ENCODE measurements at regions of chr17 and their contacts with region 1.

Region 1: GRCh38 chr17:46121841-46122485 is 71.3 kb downstream of the KANSL1 start:
- DNase-seq: no peak
- H3K4me3 Mint-ChIP-seq: no peak overlapping the region
- H3K27ac Mint-ChIP-seq: peak overlapping the region; percentile 8
- H3K4me1 Mint-ChIP-seq: peaks cover 41% of the 10 kb centered on the region
- H3K27me3 Mint-ChIP-seq: no peaks in the 10 kb centered on the region

Region 2: DNA sequence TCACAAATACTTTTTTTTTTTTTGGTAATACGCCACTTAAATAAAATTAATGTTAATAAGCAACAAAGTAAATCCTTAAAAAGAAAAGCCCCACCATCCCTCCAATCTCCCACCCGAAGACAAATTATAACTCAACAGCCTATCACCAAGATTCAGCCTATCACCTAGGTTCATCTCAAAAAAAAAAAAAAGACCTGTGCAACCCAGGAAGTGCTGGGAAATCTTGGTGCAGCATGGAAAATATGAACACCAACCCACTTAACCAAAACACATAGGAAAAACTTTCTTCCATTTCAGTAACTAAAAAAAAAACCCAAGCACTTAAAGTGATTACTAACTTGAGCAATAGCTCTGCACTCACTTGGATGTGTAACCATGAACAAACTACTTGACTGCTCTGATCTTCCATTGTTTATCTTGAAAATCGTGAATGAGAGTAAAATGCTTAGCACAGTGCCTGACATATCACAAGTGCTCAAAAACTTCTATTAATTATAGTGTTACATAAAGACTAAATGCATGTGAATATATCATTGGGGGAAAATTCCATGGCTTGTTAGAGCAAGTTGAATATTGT is 32.5 kb before region 1 on chr17:
- intact Hi-C with region 1: loop called (anchors 5 kb)
- DNase-seq: no peak
- H3K4me3 Mint-ChIP-seq: no peak overlapping the region
- H3K27ac Mint-ChIP-seq: peak overlapping the region; percentile 7
- H3K4me1 Mint-ChIP-seq: peaks cover 31% of the 10 kb centered on the region
- H3K27me3 Mint-ChIP-seq: no peaks in the 10 kb centered on the region

Region 3: DNA sequence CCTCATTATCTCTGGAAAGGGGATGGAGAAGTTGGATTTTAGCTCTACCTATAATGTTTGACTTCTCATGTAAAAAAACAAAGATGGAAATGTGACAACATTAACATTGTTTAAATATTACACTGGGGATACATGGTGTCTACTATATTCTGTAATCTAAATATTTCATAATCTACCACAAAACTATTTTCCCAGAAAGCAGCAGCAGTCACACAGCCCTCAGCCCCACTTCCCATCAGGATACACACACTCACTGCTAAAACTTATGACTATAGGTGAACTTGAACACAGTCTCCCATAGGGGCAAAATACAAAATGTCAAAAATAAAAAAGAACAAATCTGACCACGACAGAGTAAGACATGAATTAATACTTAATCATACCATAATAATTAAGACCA is 24.5 kb before region 1 on chr17:
- intact Hi-C with region 1: loop called (anchors 1 kb)
- DNase-seq: no peak
- H3K4me3 Mint-ChIP-seq: no peak overlapping the region
- H3K27ac Mint-ChIP-seq: no peak overlapping the region
- H3K4me1 Mint-ChIP-seq: peaks cover 36% of the 10 kb centered on the region
- H3K27me3 Mint-ChIP-seq: no peaks in the 10 kb centered on the region

Region 4: GRCh38 chr17:46144246-46144645 is 22.3 kb after region 1 on chr17:
- intact Hi-C with region 1: loop called (anchors 1 kb)
- DNase-seq: no peak
- H3K4me3 Mint-ChIP-seq: no peak overlapping the region
- H3K27ac Mint-ChIP-seq: peak overlapping the region; percentile 26
- H3K4me1 Mint-ChIP-seq: peaks cover 75% of the 10 kb centered on the region
- H3K27me3 Mint-ChIP-seq: no peaks in the 10 kb centered on the region

Region 5: GRCh38 chr17:46841561-46842379 is 719.8 kb after region 1 on chr17:
- intact Hi-C with region 1: no loop called
- DNase-seq: no peak
- H3K4me3 Mint-ChIP-seq: no peak overlapping the region
- H3K27ac Mint-ChIP-seq: no peak overlapping the region
- H3K4me1 Mint-ChIP-seq: no peaks in the 10 kb centered on the region
- H3K27me3 Mint-ChIP-seq: peaks cover 23% of the 10 kb centered on the region

Measured in activated T-helper 2 cell treated with anti-CD3 and anti-CD28 coated beads, Interferon-gamma antibody, Interleukin-2, Interleukin-4, amounts not matched to agents 10 μg/mL and 5 μg/mL and 100 μg/mL, durations not matched to agents 14 hours and 24 hours and 36 hours (primary cell).